ENCODE measurements at regions of chr6 and their contacts with region 1.

Region 1: DNA sequence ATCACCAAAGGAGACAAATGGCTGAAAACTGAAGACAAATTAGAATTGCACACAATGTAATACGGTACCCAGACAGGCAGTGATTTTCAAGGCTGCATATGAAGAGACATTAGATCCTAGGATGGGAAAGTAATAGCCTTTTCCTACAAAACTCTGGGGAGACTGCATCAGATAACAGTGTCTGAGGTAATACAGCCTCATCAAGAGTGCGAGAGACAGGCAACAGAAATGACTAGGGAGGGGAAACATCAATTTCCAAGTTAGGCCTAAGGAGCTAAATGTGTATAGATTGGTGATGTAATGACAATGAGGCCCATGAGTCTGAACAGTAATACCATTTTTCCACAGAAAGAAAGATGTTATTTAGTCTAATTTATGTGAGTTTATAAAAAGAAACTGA is 200.3 kb downstream of the HTR1B start:
- DNase-seq: no peak
- H3K4me3 Mint-ChIP-seq: no peak overlapping the region
- H3K27ac Mint-ChIP-seq: no peak overlapping the region
- H3K4me1 Mint-ChIP-seq: no peaks in the 10 kb centered on the region
- H3K27me3 Mint-ChIP-seq: no peaks in the 10 kb centered on the region
- CTCF ChIP-seq: no peak

Region 2: DNA sequence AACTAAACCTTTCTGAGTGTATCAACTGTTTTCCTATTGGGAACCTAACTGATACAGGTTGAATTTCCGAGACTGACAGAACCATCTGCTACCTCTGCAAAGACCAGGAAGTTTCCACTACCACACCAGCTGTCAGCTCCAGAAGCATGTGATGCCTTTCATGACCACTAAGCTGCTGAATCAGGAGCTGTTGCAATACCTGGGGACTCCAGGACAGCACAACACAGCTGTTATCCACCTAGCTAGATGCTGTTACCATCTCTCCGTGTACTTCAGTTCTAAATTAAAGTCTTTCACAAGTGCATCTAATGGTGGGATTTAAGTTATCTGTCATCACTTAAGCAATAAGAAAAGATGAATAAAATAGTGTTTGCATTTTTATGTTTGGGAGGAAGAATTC is 1032.3 kb before region 1 on chr6:
- CTCF ChIA-PET with region 1: no interaction called
- intact Hi-C with region 1: no loop called
- DNase-seq: peak; percentile 13
- H3K4me3 Mint-ChIP-seq: no peak overlapping the region
- H3K27ac Mint-ChIP-seq: no peak overlapping the region
- H3K4me1 Mint-ChIP-seq: no peaks in the 10 kb centered on the region
- H3K27me3 Mint-ChIP-seq: no peaks in the 10 kb centered on the region
- CTCF ChIP-seq: no peak

Region 3: GRCh38 chr6:77292564-77293546 is 29.9 kb after region 1 on chr6:
- CTCF ChIA-PET with region 1: no interaction called
- intact Hi-C with region 1: loop called (anchors 5 kb)
- DNase-seq: no peak
- H3K4me3 Mint-ChIP-seq: peak overlapping the region; percentile 49
- H3K27ac Mint-ChIP-seq: peak overlapping the region; percentile 26
- H3K4me1 Mint-ChIP-seq: peaks cover 30% of the 10 kb centered on the region
- H3K27me3 Mint-ChIP-seq: no peaks in the 10 kb centered on the region
- CTCF ChIP-seq: no peak

Region 4: GRCh38 chr6:78709021-78709420 is 1446.0 kb after region 1 on chr6:
- CTCF ChIA-PET with region 1: no interaction called
- intact Hi-C with region 1: no loop called
- DNase-seq: no peak
- H3K4me3 Mint-ChIP-seq: no peak overlapping the region
- H3K27ac Mint-ChIP-seq: no peak overlapping the region
- H3K4me1 Mint-ChIP-seq: no peaks in the 10 kb centered on the region
- H3K27me3 Mint-ChIP-seq: no peaks in the 10 kb centered on the region
- CTCF ChIP-seq: no peak